Ascending aorta (tissue), 2 donors: ENCODE measurements at regions of chr21 and their contacts with region 1.

Region 1: GRCh38 chr21:29164325-29164942 is 34.0 kb downstream of the MAP3K7CL start:
- DNase-seq: no peak
- H3K4me3 ChIP-seq: no peak overlapping the region
- H3K27ac ChIP-seq: peak overlapping the region; percentile 78 to 86
- H3K4me1 ChIP-seq: peaks cover 5 to 14% of the 10 kb centered on the region in 2 donors
- H3K27me3 ChIP-seq: no peaks in the 10 kb centered on the region
- CTCF ChIP-seq: peak; percentile 65 to 78 (median 65)

Region 2: DNA sequence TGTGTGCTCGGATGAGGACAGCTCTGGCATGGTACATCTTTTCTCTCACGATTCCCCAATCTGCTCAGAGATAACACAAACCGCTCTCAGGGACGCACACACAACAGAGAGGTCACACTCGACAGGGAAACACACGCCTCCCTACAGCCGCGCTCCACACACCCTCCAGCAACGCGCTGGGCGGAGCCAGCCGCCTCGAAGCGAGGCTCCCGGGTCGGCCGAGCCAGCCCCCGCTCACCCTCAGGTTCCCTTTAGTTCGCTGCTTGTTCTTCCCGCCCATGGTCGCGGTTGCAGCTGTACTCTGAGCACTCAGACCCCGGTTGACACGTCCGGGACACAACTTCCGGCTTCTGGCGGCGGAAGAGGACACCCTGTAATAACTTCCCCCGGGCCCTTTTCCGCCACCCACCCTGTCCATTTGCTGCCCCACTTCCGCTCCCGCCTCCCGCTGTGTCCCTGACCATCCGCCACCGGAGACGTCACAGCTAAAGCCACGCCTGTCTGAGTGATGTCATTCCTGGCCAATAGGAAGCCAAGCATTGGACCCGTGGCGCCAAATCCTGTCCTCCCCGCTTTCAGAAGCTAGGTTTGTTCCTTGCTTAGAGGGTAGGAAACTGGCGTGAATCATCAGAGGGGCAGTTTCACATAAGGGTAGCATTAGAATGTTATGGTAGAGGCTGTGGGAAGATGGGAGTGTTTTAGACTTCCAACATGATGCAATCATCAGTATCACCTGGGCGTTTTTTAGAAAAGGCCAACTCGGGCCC is 171.7 kb before region 1 on chr21 and contains the start of gene LTN1:
- intact Hi-C with region 1: loop called (anchors 10 kb)
- DNase-seq: peak; percentile 97 to 99
- H3K4me3 ChIP-seq: peak within 1 kb of the TSS; percentile 74 to 98
- H3K27ac ChIP-seq: peak within 1 kb of the TSS; percentile 86 to 90
- H3K4me1 ChIP-seq: peaks cover 5 to 11% of the 10 kb centered on the region in 2 donors
- H3K27me3 ChIP-seq: no peaks in the 10 kb centered on the region
- CTCF ChIP-seq: no peak
- total RNA-seq, gene LTN1: 5.6 TPM

Region 3: DNA sequence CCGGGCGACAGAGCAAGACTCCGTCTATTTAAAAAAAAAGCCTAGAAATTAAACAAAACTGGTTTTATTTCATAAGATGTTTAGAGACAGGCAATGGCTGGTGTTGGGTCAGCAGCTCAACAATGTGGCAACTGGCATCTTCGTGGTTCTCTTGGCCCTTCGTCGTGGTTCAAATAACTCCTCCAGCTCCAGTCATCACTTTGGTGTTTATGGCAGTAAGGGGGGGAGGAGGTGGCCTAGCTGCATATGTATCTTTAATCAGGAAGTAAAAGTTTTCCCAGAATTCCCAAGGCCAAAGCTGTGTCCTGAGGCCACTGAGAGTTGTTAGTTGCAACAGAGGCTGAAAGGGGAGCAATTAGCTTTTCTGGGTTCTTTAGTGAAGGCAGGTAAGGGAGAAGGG is 158.7 kb before region 1 on chr21:
- intact Hi-C with region 1: no loop called
- DNase-seq: no peak
- H3K4me3 ChIP-seq: no peak overlapping the region
- H3K27ac ChIP-seq: no peak overlapping the region
- H3K4me1 ChIP-seq: peaks cover 0 to 6% of the 10 kb centered on the region in 2 donors
- H3K27me3 ChIP-seq: no peaks in the 10 kb centered on the region
- CTCF ChIP-seq: no peak

Region 4: DNA sequence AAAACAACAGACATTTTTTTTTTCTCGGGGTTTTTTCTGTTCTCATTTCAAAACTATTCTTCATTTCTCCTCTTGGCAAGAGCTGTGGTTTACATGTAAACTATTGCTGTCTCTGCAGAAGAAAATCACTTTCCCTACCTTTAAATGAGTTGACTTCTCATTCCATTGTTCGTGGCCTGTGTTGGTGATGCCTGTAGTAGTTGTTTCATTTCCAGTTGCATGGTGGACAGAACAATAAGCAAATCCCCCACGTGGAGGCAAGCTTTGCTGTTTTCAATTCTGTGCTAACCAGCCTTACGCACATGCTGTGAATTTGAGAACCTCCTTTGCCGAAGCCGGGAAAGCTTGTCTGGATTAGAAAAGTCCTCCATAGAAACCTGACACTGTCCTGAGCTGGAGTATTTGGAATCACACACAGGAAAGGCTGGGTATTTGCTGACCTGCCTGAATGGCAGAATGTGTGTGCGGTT is 60.2 kb before region 1 on chr21:
- intact Hi-C with region 1: no loop called
- DNase-seq: no peak
- H3K4me3 ChIP-seq: no peak overlapping the region
- H3K27ac ChIP-seq: no peak overlapping the region
- H3K4me1 ChIP-seq: no peaks in the 10 kb centered on the region
- H3K27me3 ChIP-seq: no peaks in the 10 kb centered on the region
- CTCF ChIP-seq: no peak

Region 5: GRCh38 chr21:29145354-29145782 is 19.1 kb before region 1 on chr21:
- intact Hi-C with region 1: loop called (anchors 1 kb)
- DNase-seq: peak in 1 of 2 donors; percentile 83
- H3K4me3 ChIP-seq: no peak overlapping the region
- H3K27ac ChIP-seq: peak overlapping the region; percentile 69 to 78
- H3K4me1 ChIP-seq: peaks cover 0 to 25% of the 10 kb centered on the region in 2 donors
- H3K27me3 ChIP-seq: no peaks in the 10 kb centered on the region
- CTCF ChIP-seq: no peak

Region 6: DNA sequence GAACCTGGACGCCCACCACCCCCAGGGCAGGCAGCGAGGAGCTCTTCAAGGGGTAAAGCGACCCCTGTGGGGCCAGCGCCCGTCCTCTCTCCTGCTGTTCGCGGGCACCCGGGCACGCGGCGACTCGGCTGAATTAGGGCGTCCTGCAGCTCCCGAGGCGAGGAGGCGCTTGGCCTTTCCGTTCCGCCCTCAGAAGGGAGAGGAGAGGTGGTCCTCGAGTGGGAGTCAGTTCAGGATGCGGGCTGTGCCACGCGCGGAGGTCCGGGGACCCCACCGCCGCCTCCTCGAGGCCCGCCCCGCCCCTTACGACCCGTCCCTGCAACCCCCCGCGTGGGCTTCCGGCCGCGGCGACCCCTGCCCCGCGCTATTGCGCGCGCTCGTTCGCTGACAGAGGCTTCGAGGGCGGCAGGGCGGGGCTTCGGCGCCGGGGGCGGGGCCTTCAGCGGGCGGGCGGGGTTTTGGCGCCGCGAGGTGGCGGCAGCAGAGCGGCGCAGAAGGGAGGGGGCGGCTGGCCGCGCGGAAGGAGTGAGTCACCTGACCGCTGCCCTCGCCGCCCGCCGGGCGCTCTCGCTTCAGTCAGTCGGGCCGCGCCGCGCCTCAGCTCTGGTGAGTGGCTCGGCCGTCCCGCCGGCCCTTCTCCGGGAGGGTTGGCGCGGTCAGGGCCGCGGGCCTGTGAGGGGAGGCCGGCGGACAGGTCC is 134.1 kb after region 1 on chr21 and contains the start of gene BACH1:
- intact Hi-C with region 1: loop called (anchors 2 kb)
- DNase-seq: peak; percentile 46 to 92
- H3K4me3 ChIP-seq: peak within 1 kb of the TSS; percentile 91 to 97
- H3K27ac ChIP-seq: peak within 1 kb of the TSS; percentile 88 to 96
- H3K4me1 ChIP-seq: peaks cover 3 to 22% of the 10 kb centered on the region in 2 donors
- H3K27me3 ChIP-seq: no peaks in the 10 kb centered on the region
- CTCF ChIP-seq: peak; percentile 14 to 46 (median 20)
- total RNA-seq, gene BACH1: 12.7 TPM

Region 7: GRCh38 chr21:29372063-29372802 is 207.8 kb after region 1 on chr21:
- intact Hi-C with region 1: loop called (anchors 1 kb)
- DNase-seq: peak in 1 of 2 donors; percentile 76
- H3K4me3 ChIP-seq: no peak overlapping the region
- H3K27ac ChIP-seq: no peak overlapping the region
- H3K4me1 ChIP-seq: no peaks in the 10 kb centered on the region
- H3K27me3 ChIP-seq: no peaks in the 10 kb centered on the region
- CTCF ChIP-seq: peak; percentile 76 to 81 (median 80)